Heart left ventricle (tissue), 16 donors: ENCODE measurements at regions of chr22 and their contacts with region 1.

Region 1: DNA sequence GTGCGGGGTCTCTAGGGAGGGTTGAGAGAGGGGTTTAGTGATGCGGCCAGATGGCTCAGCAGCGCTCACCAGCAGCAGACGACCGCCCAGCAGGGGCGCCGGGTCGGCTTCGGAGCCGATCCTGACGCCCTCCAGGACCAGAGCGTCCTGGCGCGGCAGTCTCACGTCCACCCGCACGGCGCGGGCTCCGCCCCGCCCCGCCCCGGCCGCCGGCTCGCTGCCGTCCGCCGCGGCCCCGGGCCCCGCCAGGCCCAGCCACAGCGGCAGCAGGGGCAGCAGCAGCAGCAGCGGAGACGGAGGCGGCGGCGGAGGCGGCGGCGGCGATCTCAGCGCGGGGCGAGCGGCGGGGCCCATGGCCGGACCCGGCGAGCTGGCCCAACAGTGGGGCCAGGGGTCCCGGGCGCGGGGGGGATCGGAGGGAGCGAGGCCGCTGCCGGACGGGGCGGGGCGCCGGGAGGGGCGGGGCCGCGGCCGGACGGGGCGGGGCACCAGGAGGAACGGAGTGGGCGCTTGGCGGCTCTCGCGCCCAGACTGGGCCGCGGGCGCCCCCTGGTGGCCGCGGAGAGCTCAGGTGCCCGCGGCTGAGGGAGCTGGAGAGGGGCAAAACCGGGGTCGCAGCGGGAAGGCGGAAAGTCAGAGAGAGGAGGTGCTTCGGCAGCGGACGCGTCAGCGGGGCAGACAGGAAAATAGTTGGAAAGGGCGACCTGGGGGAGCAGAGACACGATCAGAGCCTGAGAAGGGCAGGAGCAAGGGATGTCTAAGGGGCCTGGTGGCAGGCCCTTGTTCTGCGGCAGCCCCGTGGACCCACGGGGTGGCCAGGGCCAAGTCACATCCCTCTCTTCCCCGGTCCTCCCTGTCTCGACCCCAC is at the start of gene RNF215:
- DNase-seq: peak; percentile 78 to 92 (median 85)
- ATAC-seq: peak; percentile 68 to 94 (median 92)
- H3K4me3 ChIP-seq: peak within 1 kb of the TSS; percentile 11 to 88 (median 62)
- H3K27ac ChIP-seq: peak within 1 kb of the TSS in 10 of 12 donors; percentile 53 to 85 (median 67)
- H3K4me1 ChIP-seq: peaks cover 0 to 24% (median 9%) of the 10 kb centered on the region in 12 donors
- H3K27me3 ChIP-seq: no peaks in the 10 kb centered on the region
- CTCF ChIP-seq: peak; percentile 81 to 99 (median 94)
- POLR2A ChIP-seq: no peak
- total RNA-seq, gene RNF215: 3.3 to 12.2 (median 6.7) TPM

Region 2: GRCh38 chr22:30104501-30105156 is 282.6 kb before region 1 on chr22:
- intact Hi-C with region 1: loop called in 7 of 10 experiments (anchors 2 to 5 kb)
- DNase-seq: no peak
- ATAC-seq: no peak
- H3K4me3 ChIP-seq: no peak overlapping the region
- H3K27ac ChIP-seq: no peak overlapping the region
- H3K4me1 ChIP-seq: no peaks in the 10 kb centered on the region
- H3K27me3 ChIP-seq: peaks cover 0 to 22% (median 0%) of the 10 kb centered on the region in 9 donors
- CTCF ChIP-seq: no peak
- POLR2A ChIP-seq: no peak

Region 3: DNA sequence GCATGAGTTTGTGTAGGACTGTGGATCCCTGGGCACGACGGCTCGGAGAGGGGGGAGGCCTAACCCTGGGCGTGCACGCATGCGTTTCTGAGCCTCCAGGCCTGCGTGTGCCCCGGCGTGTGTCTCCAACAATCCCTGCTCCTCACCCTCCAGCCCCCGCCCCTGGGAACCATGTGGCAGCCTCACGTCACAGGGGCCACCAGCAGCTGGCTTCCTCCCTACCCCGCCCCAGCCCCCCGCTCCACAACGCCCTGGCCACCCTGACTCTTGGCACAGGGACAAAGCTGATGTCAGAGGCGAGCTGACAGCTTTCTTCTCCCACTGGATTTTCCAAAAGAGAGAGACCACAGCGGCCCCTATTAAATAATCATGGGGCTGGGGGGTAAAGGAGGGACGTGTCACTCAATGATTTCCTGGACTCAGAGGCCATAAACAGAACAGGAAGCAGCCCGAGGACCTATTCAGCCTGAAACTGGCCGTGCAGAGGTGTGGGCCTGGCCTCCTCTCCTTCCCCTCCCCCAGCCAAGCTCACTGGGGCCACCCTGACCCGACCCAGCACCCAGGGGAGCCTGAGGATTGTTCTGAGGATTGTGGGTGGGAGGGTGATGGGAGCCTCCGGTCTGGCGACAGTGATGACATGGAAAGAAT is 133.9 kb before region 1 on chr22:
- intact Hi-C with region 1: loop called in 1 of 10 experiments (anchors 1 kb)
- DNase-seq: peak; percentile 71 to 88 (median 81)
- ATAC-seq: peak in 3 of 4 donors; percentile 9 to 57 (median 44)
- H3K4me3 ChIP-seq: peak overlapping the region in 1 of 12 donors; percentile 2
- H3K27ac ChIP-seq: peak overlapping the region in 6 of 12 donors; percentile 10 to 70 (median 39)
- H3K4me1 ChIP-seq: peaks cover 0 to 52% (median 17%) of the 10 kb centered on the region in 12 donors
- H3K27me3 ChIP-seq: peaks cover 0 to 20% (median 4%) of the 10 kb centered on the region in 9 donors
- CTCF ChIP-seq: no peak
- POLR2A ChIP-seq: no peak

Region 4: GRCh38 chr22:30289134-30289979 is 97.8 kb before region 1 on chr22 and contains the start of gene CASTOR1:
- intact Hi-C with region 1: loop called (anchors 1 to 2 kb)
- DNase-seq: peak; percentile 99 to 100 (median 99)
- ATAC-seq: peak; percentile 85 to 91 (median 90)
- H3K4me3 ChIP-seq: peak within 1 kb of the TSS; percentile 62 to 99 (median 87)
- H3K27ac ChIP-seq: peak within 1 kb of the TSS; percentile 84 to 98 (median 95)
- H3K4me1 ChIP-seq: peaks cover 12 to 45% (median 37%) of the 10 kb centered on the region in 12 donors
- H3K27me3 ChIP-seq: no peaks in the 10 kb centered on the region
- CTCF ChIP-seq: peak in 1 of 12 donors; percentile 7
- POLR2A ChIP-seq: peak; percentile 68 to 87
- total RNA-seq, gene CASTOR1: 3.8 to 16.6 (median 7.1) TPM

Region 5: GRCh38 chr22:30356449-30357235 is 30.6 kb before region 1 on chr22 and contains the starts of genes CCDC157 and SF3A1:
- intact Hi-C with region 1: loop called in 1 of 10 experiments (anchors 2 kb)
- DNase-seq: peak; percentile 89 to 93 (median 92)
- ATAC-seq: peak; percentile 93 to 99 (median 98)
- H3K4me3 ChIP-seq: peak within 1 kb of the TSS; percentile 57 to 100 (median 83)
- H3K27ac ChIP-seq: peak within 1 kb of the TSS; percentile 92 to 99 (median 97)
- H3K4me1 ChIP-seq: peaks cover 6 to 39% (median 25%) of the 10 kb centered on the region in 12 donors
- H3K27me3 ChIP-seq: no peaks in the 10 kb centered on the region
- CTCF ChIP-seq: peak in 3 of 12 donors; percentile 6 to 23 (median 6)
- POLR2A ChIP-seq: peak in 1 of 2 donors; percentile 90
- total RNA-seq, gene CCDC157: 0.45 to 1.7 (median 1.1) TPM
- total RNA-seq, gene SF3A1: 57.7 to 142 (median 99.2) TPM

Region 6: GRCh38 chr22:30591588-30592359 is 204.6 kb after region 1 on chr22 and contains the start of gene PES1:
- intact Hi-C with region 1: no loop called
- DNase-seq: peak; percentile 94 to 97 (median 96)
- ATAC-seq: peak; percentile 100
- H3K4me3 ChIP-seq: peak within 1 kb of the TSS; percentile 59 to 95 (median 82)
- H3K27ac ChIP-seq: peak within 1 kb of the TSS; percentile 43 to 91 (median 81)
- H3K4me1 ChIP-seq: peaks cover 0 to 23% (median 15%) of the 10 kb centered on the region in 12 donors
- H3K27me3 ChIP-seq: no peaks in the 10 kb centered on the region
- CTCF ChIP-seq: no peak
- POLR2A ChIP-seq: peak in 1 of 2 donors; percentile 45
- total RNA-seq, gene PES1: 15.7 to 39.8 (median 27.8) TPM

Region 7: GRCh38 chr22:30754971-30755756 is 368.0 kb after region 1 on chr22:
- intact Hi-C with region 1: loop called in 2 of 10 experiments (anchors 5 to 10 kb)
- DNase-seq: peak in 4 of 5 donors; percentile 36 to 45 (median 41)
- ATAC-seq: peak; percentile 63 to 87 (median 79)
- H3K4me3 ChIP-seq: no peak overlapping the region
- H3K27ac ChIP-seq: no peak overlapping the region
- H3K4me1 ChIP-seq: peaks cover 0 to 3% (median 0%) of the 10 kb centered on the region in 12 donors
- H3K27me3 ChIP-seq: no peaks in the 10 kb centered on the region
- CTCF ChIP-seq: peak; percentile 38 to 71 (median 60)
- POLR2A ChIP-seq: no peak